ENCODE measurements at regions of chr1 and their contacts with region 1.

Region 1: DNA sequence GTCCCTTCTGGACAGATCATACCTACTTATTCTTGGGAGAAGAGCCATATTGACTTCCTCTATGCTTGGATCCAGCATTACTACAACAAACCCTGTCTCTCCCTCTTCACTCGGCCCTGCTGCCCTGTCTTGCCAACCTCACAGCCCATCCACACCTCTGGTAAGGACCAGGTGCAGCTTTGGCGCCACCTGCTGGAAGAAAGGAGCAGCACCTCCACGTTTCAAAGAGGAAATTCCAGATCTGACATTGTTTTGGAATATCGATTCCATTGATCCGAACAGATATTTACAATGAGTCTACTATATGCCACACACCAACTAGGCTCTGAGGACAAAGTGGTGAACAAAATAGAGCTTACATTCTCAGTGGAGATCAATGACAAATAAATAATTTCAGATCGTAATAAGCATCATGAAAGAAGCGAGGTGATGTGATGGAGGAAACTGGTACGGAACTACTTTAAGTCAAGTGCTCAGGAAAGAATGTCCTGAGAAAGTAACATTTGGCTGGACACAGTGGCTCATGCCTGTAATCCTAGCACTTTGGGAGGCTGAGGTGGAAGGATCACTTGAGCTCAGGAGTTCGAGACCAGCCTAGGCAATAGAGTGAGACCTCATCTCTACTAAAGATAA is 18.7 kb downstream of the MFSD2A start:
- H3K4me3 ChIP-seq: no peak overlapping the region
- H3K27ac ChIP-seq: no peak overlapping the region
- H3K4me1 ChIP-seq: no peaks in the 10 kb centered on the region
- CTCF ChIP-seq: peak; percentile 89

Region 2: DNA sequence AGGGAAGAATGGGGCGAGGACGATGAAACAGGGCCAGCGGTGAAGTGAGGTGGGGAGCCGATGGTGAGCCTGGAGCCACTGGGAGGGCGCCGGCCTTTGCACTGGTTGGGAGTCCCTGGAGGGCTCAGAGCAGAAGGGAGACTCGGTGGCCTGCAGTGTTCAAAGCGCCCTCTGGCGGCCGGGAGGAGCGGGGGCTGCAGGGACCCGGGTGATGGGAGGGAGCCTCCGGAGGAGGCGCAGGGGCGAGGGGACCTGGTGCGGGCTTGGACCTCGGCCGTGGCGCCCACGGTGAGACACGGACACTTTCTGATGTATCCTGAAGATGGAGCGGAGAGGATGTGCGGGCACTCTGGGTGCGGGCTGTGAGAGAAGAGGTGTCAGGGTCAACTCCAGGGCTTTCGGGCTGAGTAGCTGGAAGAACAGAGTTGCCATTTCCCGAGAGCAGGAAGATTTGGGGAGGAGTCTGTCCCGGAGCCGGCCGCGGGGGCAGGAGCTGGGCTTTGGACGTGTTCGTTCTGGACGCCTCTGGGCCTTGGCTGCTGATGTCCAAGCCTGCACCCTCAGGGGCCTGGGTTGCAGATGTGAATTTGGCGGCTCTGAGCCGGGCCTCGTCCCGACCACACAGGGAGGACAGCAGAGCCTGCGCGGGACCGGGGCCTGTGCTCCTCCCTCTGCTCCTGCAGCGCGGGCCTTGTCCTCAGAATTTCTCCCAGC is 363.8 kb before region 1 on chr1:
- CTCF ChIA-PET with region 1: no interaction called
- POLR2A ChIA-PET with region 1: no interaction called
- H3K4me3 ChIP-seq: no peak overlapping the region
- H3K27ac ChIP-seq: no peak overlapping the region
- H3K4me1 ChIP-seq: no peaks in the 10 kb centered on the region
- CTCF ChIP-seq: peak; percentile 81; the same call in 1 of the 2 replicates

Region 3: DNA sequence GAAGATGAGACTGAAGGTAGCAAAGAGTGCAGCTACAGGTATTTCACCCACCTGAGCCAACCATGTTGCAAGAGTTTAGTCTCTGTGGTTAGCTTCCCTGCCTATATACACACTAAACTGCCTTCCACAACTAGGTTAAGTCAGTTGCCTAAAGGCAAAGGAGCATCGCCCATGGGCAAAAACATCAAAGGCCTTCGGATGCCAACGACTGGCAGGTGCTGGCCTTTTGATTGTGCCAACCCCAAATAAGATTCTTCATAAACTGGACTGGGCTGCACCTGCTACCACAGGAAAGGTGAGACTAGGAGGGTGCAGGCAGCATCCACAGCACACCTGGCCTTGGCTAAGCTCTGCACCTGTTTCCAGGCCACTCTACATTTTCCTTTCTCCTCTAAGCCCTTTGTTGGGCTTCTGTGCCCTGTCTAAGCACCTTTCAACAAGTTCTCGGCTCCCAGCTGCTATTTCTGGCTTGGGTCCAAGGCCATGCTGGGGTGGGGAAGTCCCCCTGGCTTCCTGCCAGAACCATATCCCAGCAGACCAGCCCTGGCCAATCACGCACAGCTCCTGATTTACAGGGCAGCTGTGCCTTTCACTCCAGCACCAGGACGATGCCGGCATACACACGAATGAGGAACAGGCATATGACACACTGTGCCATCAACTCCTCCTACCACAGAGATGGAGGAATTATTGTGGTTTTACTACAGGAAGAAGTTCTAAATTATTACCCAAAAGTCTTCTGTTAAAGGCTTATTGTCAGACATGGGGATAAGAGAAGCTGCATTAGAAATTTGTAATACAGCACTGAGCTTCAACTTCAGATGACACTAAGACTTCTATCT is 128.1 kb before region 1 on chr1:
- CTCF ChIA-PET with region 1: interaction called, 10 read pairs
- POLR2A ChIA-PET with region 1: no interaction called
- H3K4me3 ChIP-seq: no peak overlapping the region
- H3K27ac ChIP-seq: no peak overlapping the region
- H3K4me1 ChIP-seq: peaks cover 12% of the 10 kb centered on the region
- CTCF ChIP-seq: no peak

Region 4: GRCh38 chr1:39907528-39908453 is 65.8 kb before region 1 on chr1:
- CTCF ChIA-PET with region 1: interaction called, 12 read pairs
- POLR2A ChIA-PET with region 1: no interaction called
- H3K4me3 ChIP-seq: no peak overlapping the region
- H3K27ac ChIP-seq: no peak overlapping the region
- H3K4me1 ChIP-seq: no peaks in the 10 kb centered on the region
- CTCF ChIP-seq: no peak

Region 5: GRCh38 chr1:39926343-39926793 is 47.3 kb before region 1 on chr1:
- CTCF ChIA-PET with region 1: interaction called, 188 read pairs
- POLR2A ChIA-PET with region 1: interaction called, 10 read pairs
- H3K4me3 ChIP-seq: no peak overlapping the region
- H3K27ac ChIP-seq: no peak overlapping the region
- H3K4me1 ChIP-seq: no peaks in the 10 kb centered on the region
- CTCF ChIP-seq: no peak

Region 6: GRCh38 chr1:40001456-40001855 is 27.8 kb after region 1 on chr1:
- CTCF ChIA-PET with region 1: interaction called, 15 read pairs
- POLR2A ChIA-PET with region 1: no interaction called
- H3K4me3 ChIP-seq: no peak overlapping the region
- H3K27ac ChIP-seq: no peak overlapping the region
- H3K4me1 ChIP-seq: no peaks in the 10 kb centered on the region
- CTCF ChIP-seq: no peak